ENCODE measurements at regions of chr6 and their contacts with region 1.

Region 1: GRCh38 chr6:108549732-108550131 is 11.0 kb upstream of the FOXO3 start:
- DNase-seq: no peak
- ATAC-seq: no peak

Region 2: GRCh38 chr6:108782179-108783041 is 232.7 kb after region 1 on chr6:
- intact Hi-C with region 1: loop called (anchors 5 kb)
- DNase-seq: peak; percentile 91
- ATAC-seq: peak; percentile 94

Measured in sciatic nerve (tissue), 2 donors.